Activated CD4-positive, alpha-beta memory T cell treated with anti-CD3 and anti-CD28 coated beads for 36 hours (primary cell): ENCODE measurements at regions of chr16 and their contacts with region 1.

Region 1: DNA sequence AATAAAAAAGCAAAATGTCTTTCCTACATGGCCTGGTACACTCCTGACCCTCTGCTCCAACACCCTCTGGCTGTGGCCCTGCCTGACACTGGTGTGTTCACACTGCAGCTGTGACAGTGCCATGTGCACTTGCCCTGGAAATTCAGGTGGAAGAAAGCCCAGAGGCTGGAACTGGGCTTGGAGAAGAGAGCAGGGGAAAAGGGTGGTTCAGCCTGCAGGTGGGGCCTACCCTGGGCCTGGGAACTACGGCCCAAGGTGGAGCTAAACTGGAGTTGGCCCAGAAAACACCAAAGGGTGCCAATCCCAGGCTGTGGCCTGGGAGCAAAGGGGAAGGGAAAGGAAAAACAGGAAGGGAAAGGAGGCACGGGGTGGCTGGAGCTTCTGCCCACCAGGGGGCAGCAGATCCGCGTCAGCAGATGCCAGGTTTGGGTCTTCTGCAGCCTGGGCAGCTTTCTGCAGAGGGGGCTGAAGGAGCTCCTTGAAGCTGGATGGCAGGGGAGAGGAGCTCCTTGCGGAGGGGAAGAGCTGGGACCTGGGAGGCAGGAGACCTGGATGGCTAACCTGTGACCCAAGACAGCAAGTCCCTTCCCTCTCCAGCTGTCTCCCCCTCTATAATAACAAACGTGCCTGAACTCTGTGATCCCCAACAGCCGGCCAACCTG is 15.4 kb upstream of the CTCF start:
- DNase-seq: peak; percentile 81
- H3K4me3 Mint-ChIP-seq: no peak overlapping the region
- H3K27ac Mint-ChIP-seq: peak overlapping the region; percentile 89
- H3K4me1 Mint-ChIP-seq: peaks cover 34% of the 10 kb centered on the region
- H3K27me3 Mint-ChIP-seq: no peaks in the 10 kb centered on the region

Region 2: DNA sequence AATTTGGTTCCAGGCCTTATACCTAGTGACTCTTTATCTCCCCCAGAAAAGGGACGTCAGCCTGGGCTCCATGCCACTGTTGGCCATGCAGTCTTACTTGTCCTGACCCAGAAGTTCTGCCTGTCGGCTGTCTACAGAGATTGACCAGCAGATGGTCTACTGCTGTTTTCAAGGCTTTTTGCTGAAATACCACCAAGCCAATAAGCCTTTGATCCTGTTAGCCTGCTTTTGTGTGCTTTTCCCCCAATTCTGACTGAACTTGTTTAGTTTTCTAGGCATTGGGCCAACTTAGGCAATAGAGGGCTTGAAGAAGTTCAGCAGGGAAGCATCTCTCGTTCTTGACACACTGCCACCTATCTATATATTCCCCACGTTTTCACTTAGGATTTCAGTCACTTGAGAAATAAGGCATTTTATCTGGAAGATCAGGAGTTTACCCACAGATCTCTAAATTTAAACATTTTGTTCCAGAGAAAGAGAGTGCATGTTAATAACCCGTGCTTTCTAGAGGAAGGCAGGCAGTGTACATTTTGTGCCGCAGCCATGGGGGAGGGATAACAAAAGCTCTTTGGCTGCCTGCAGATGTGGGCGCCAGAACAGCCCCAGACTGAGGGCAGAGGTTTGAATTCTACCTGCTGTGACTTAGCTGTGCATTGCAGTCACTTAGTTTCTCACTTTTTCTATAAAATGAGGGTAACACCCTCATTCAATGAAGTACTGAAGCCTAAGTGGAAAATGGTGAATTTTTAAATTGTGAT is 85.7 kb after region 1 on chr16:
- CTCF ChIA-PET with region 1: interaction called, 17 read pairs
- POLR2A ChIA-PET with region 1: no interaction called
- intact Hi-C with region 1: no loop called
- DNase-seq: no peak
- H3K4me3 Mint-ChIP-seq: no peak overlapping the region
- H3K27ac Mint-ChIP-seq: no peak overlapping the region
- H3K4me1 Mint-ChIP-seq: no peaks in the 10 kb centered on the region
- H3K27me3 Mint-ChIP-seq: no peaks in the 10 kb centered on the region

Region 3: GRCh38 chr16:67653128-67653786 is 106.4 kb after region 1 on chr16:
- CTCF ChIA-PET with region 1: interaction called, 243 read pairs
- POLR2A ChIA-PET with region 1: interaction called, 3 read pairs
- intact Hi-C with region 1: no loop called
- DNase-seq: no peak
- H3K4me3 Mint-ChIP-seq: no peak overlapping the region
- H3K27ac Mint-ChIP-seq: no peak overlapping the region
- H3K4me1 Mint-ChIP-seq: peaks cover 11% of the 10 kb centered on the region
- H3K27me3 Mint-ChIP-seq: no peaks in the 10 kb centered on the region

Region 4: DNA sequence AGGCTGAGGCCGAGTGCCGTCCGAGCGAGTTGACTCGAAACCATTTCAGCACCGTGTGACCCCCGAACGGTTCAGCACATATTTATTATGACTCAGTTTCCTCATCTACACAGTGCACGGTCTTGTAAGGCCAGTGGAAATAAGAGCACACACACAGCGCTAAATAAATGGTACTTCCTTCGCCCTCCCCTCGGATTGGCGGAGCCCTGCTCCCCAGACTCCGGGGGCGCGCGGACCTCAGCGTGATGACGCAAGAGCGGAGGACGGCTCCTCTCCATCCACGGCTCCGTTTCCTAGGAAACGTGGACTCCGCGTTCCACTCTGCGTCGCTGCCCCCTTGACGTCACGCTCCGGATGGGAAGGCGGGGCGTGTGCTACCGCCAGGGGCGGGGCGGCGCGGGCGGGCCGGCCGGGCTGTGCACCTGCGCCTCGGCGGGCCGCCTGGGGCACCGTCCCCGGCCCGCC is 113.7 kb after region 1 on chr16 and contains the start of gene PARD6A:
- CTCF ChIA-PET with region 1: interaction called, 40 read pairs
- POLR2A ChIA-PET with region 1: interaction called, 3 read pairs
- intact Hi-C with region 1: loop called (anchors 5 kb)
- DNase-seq: peak; percentile 98
- H3K4me3 Mint-ChIP-seq: peak within 1 kb of the TSS; percentile 86
- H3K27ac Mint-ChIP-seq: peak within 1 kb of the TSS; percentile 87
- H3K4me1 Mint-ChIP-seq: peaks cover 27% of the 10 kb centered on the region
- H3K27me3 Mint-ChIP-seq: no peaks in the 10 kb centered on the region
- total RNA-seq, gene PARD6A: 11.2 to 11.5 TPM

Region 5: GRCh38 chr16:67758006-67758405 is 211.1 kb after region 1 on chr16:
- CTCF ChIA-PET with region 1: no interaction called
- POLR2A ChIA-PET with region 1: no interaction called
- intact Hi-C with region 1: no loop called
- DNase-seq: no peak
- H3K4me3 Mint-ChIP-seq: no peak overlapping the region
- H3K27ac Mint-ChIP-seq: no peak overlapping the region
- H3K4me1 Mint-ChIP-seq: peaks cover 17% of the 10 kb centered on the region
- H3K27me3 Mint-ChIP-seq: no peaks in the 10 kb centered on the region

Region 6: DNA sequence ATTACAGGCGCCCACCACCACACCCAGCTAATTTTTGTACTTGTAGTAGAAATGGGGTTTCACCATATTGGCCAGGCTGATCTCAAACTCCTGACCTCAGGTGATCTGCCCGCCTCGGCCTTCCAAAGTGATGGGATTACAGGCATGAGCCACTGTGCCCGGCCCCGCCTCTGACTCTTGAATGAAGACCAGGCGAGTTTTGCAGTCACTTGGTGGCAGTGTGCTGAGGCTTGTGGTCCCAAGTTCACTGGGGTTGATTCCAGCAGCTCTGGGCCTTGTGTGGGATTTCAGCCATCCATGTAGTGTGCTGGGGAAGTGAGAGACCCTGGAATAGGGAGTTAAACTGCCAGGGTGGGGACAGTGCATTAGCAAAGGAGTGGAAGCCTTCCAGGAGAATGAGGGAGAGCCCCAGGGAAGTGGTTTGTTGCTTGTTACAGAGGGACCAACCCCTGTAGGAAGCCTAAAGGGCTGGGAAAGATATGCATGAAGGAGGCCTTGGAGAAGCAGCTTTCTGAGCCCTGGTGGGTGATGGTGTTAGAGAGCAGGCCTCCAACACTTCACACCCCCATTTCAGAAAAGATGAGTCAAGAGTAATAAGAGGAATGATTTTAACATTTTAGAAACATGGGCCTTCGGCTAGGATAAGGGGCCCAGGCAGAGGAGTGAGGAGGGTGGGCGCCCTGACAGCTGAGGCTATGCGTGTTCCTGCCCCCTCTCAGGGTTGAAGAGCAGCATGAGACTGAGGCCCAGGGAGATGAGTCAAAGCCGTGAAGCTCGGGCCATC is 360.7 kb after region 1 on chr16:
- CTCF ChIA-PET with region 1: no interaction called
- POLR2A ChIA-PET with region 1: no interaction called
- intact Hi-C with region 1: no loop called
- DNase-seq: no peak
- H3K4me3 Mint-ChIP-seq: no peak overlapping the region
- H3K27ac Mint-ChIP-seq: peak overlapping the region; percentile 49
- H3K4me1 Mint-ChIP-seq: peaks cover 10% of the 10 kb centered on the region
- H3K27me3 Mint-ChIP-seq: no peaks in the 10 kb centered on the region